Heart left ventricle (tissue), 16 donors: ENCODE measurements at regions of chr17 and their contacts with region 1.

Region 1: GRCh38 chr17:1455797-1456599 is at the start of gene CRK:
- DNase-seq: peak; percentile 96 to 100 (median 98)
- ATAC-seq: peak; percentile 90 to 96 (median 94)
- H3K4me3 ChIP-seq: peak within 1 kb of the TSS; percentile 84 to 100 (median 94)
- H3K27ac ChIP-seq: peak within 1 kb of the TSS; percentile 89 to 99 (median 98)
- H3K4me1 ChIP-seq: peaks cover 6 to 62% (median 54%) of the 10 kb centered on the region in 12 donors
- H3K27me3 ChIP-seq: no peaks in the 10 kb centered on the region
- CTCF ChIP-seq: peak in 4 of 12 donors; percentile 11 to 48 (median 16)
- POLR2A ChIP-seq: peak; percentile 71 to 93
- total RNA-seq, gene CRK: 28.8 to 47.0 (median 42.2) TPM

Region 2: DNA sequence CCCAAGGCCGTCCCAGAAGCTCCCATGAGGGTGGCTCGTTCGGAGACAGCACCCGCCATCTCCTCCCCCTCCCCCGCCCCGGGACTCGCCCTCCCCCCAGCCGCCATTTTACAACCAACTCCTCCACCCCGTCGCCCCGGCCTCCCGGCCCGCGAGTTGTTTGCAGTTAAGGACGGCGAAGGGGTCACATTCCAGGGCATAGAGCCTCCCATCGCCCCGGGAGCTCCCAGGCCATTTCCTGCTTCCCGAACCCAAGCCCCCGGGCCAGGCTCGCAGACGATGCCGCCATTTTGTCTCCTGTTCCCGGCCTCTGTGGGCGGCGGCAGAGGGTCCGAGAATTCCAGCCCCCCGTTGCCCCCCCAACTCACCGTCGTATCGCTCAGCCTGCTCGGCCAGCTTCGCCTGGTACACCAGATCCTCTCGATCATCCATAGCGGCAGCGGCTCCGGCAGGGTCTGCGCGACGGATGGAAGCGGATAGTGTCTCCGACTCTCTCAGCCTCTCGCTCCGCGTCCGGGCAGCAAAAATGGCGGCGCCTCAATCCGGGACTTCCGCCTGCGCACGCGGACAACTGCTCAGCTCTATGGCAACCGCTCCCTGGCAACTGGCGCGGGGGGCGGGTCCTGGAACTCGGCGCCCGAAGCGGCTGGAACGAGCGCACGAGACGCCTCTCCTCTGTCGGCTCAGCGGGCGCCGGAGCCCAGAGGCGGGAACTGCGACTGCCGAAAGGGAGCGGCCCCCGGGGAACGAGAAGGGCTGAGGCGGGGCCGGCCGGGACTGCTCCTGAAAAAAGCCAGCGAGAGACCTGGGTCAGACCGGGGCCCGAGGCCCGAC is 56.1 kb before region 1 on chr17 and contains the start of gene YWHAE:
- intact Hi-C with region 1: loop called in 2 of 10 experiments (anchors 2 to 10 kb)
- DNase-seq: peak; percentile 98 to 99 (median 98)
- ATAC-seq: peak; percentile 97 to 99 (median 98)
- H3K4me3 ChIP-seq: peak within 1 kb of the TSS; percentile 76 to 98 (median 88)
- H3K27ac ChIP-seq: peak within 1 kb of the TSS; percentile 93 to 99 (median 98)
- H3K4me1 ChIP-seq: peaks cover 6 to 49% (median 27%) of the 10 kb centered on the region in 12 donors
- H3K27me3 ChIP-seq: no peaks in the 10 kb centered on the region
- CTCF ChIP-seq: no peak
- POLR2A ChIP-seq: peak in 1 of 2 donors; percentile 87
- total RNA-seq, gene YWHAE: 562 to 1,150 (median 618) TPM

Region 3: GRCh38 chr17:1488030-1488863 is 32.2 kb after region 1 on chr17:
- intact Hi-C with region 1: loop called in 6 of 10 experiments (anchors 2 to 5 kb)
- DNase-seq: peak; percentile 90 to 94 (median 94)
- ATAC-seq: peak; percentile 45 to 71 (median 67)
- H3K4me3 ChIP-seq: peak overlapping the region; percentile 26 to 85 (median 70)
- H3K27ac ChIP-seq: peak overlapping the region; percentile 94 to 100 (median 99)
- H3K4me1 ChIP-seq: peaks cover 7 to 86% (median 68%) of the 10 kb centered on the region in 12 donors
- H3K27me3 ChIP-seq: no peaks in the 10 kb centered on the region
- CTCF ChIP-seq: peak in 5 of 12 donors; percentile 9 to 18 (median 15)
- POLR2A ChIP-seq: peak in 1 of 2 donors; percentile 69